ENCODE measurements at regions of chr12 and their contacts with region 1.

Region 1: DNA sequence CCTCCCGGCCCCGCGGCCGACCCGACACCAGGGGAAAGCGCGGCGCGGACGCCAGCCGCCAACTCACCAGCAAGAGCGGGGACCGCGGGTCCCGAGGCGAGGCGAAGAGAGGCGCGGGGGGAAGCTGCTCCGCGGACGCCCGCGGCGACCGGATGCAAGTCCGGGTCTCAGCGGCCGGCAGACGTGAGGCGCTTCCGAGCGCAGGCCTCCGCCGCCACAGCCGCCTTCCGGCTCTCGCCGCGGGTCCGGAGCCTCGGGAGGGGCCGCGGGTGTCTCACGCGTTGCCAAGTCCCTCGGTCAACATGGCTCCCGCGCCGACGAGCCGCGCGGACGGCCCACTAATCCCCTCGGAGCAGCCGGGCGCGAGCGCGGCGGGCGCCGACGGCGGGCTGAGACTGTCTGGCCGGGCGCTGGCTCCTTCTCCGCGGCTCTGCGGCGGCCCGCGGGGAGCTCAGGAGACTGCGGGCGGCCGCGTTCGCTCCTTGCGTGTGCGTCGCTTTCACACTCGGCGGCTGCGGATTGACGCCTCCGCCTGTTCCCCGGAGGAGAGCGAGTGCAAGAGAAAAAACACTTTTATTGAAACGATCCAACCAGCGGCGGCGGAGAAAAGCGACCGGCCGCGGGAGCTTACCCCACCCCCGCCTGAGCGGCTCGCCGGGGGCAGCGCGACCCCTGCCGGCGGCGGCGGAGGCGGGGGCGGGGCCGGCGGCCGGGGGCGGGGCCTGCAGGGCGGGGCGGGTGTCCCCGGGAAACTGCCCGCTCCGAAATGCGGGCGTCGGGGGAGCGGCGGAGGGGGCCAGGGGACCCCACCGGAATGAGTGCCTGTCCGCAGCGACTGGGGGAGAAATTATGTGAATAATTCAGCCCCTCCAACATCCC is at the start of gene CDK17:
- DNase-seq: peak; percentile 88
- H3K4me3 Mint-ChIP-seq: peak within 1 kb of the TSS; percentile 90
- H3K27ac Mint-ChIP-seq: peak within 1 kb of the TSS; percentile 60
- H3K4me1 Mint-ChIP-seq: peaks cover 26% of the 10 kb centered on the region
- H3K27me3 Mint-ChIP-seq: no peaks in the 10 kb centered on the region
- CTCF ChIP-seq: peak; percentile 15
- total RNA-seq, gene CDK17: 28.8 and 33.0 TPM in 2 replicates

Region 2: GRCh38 chr12:96061864-96062453 is 338.2 kb before region 1 on chr12:
- CTCF ChIA-PET with region 1: no interaction called
- intact Hi-C with region 1: loop called (anchors 2 kb)
- DNase-seq: peak; percentile 82
- H3K4me3 Mint-ChIP-seq: no peak overlapping the region
- H3K27ac Mint-ChIP-seq: no peak overlapping the region
- H3K4me1 Mint-ChIP-seq: no peaks in the 10 kb centered on the region
- H3K27me3 Mint-ChIP-seq: no peaks in the 10 kb centered on the region
- CTCF ChIP-seq: peak; percentile 72

Region 3: DNA sequence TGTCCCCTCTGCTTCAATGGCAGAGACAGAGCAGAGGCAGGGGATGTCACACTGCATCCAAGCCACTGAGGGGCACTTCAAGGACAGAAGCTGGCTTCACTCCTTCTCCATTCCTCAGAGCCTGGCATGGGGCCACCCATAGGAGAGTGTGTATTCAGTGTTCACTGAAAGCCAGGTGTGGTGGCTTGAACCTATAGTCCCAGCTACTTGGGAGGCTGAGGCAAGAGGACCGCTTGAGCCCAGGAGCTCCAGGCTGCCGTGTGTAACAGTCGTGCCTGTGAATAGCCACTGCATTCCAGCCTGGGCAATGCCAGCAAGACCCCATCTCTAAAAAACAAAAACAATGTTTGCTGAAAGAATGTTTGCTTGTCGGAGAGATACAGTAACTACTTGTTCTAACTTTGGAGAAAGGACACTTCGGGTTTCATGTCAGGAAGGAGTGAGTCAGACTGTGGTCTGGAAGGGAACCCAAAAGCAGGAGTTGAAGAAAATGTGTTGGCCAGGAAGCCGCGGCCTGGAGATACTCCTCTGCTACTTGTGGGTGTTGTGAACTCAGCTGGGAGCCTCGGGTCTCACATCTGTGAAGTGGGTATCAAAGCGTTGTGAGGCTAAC is 162.6 kb before region 1 on chr12:
- CTCF ChIA-PET with region 1: no interaction called
- intact Hi-C with region 1: no loop called
- DNase-seq: peak; percentile 13
- H3K4me3 Mint-ChIP-seq: no peak overlapping the region
- H3K27ac Mint-ChIP-seq: peak overlapping the region; percentile 4
- H3K4me1 Mint-ChIP-seq: peaks cover 9% of the 10 kb centered on the region
- H3K27me3 Mint-ChIP-seq: no peaks in the 10 kb centered on the region
- CTCF ChIP-seq: no peak

Region 4: GRCh38 chr12:96263449-96263902 is 136.7 kb before region 1 on chr12:
- CTCF ChIA-PET with region 1: no interaction called
- intact Hi-C with region 1: loop called (anchors 10 kb)
- DNase-seq: no peak
- H3K4me3 Mint-ChIP-seq: no peak overlapping the region
- H3K27ac Mint-ChIP-seq: no peak overlapping the region
- H3K4me1 Mint-ChIP-seq: no peaks in the 10 kb centered on the region
- H3K27me3 Mint-ChIP-seq: no peaks in the 10 kb centered on the region
- CTCF ChIP-seq: no peak

Region 5: GRCh38 chr12:96361074-96361473 is 39.1 kb before region 1 on chr12:
- CTCF ChIA-PET with region 1: no interaction called
- intact Hi-C with region 1: loop called (anchors 5 kb)
- DNase-seq: no peak
- H3K4me3 Mint-ChIP-seq: no peak overlapping the region
- H3K27ac Mint-ChIP-seq: no peak overlapping the region
- H3K4me1 Mint-ChIP-seq: peaks cover 17% of the 10 kb centered on the region
- H3K27me3 Mint-ChIP-seq: no peaks in the 10 kb centered on the region
- CTCF ChIP-seq: no peak

Region 6: GRCh38 chr12:96501139-96501761 is 101.1 kb after region 1 on chr12:
- CTCF ChIA-PET with region 1: no interaction called
- intact Hi-C with region 1: loop called (anchors 5 kb)
- DNase-seq: peak; percentile 59
- H3K4me3 Mint-ChIP-seq: no peak overlapping the region
- H3K27ac Mint-ChIP-seq: peak overlapping the region; percentile 89
- H3K4me1 Mint-ChIP-seq: peaks cover 36% of the 10 kb centered on the region
- H3K27me3 Mint-ChIP-seq: no peaks in the 10 kb centered on the region
- CTCF ChIP-seq: no peak